PC-3 (cell line): ENCODE measurements at regions of chr14 and their contacts with region 1.

Region 1: GRCh38 chr14:39988939-39989338 is 556.7 kb upstream of the FBXO33 start:
- DNase-seq: peak; percentile 78
- ATAC-seq: peak; percentile 93
- H3K4me3 ChIP-seq: no peak overlapping the region
- H3K27ac ChIP-seq: no peak overlapping the region
- H3K4me1 ChIP-seq: no peaks in the 10 kb centered on the region
- H3K27me3 ChIP-seq: no peaks in the 10 kb centered on the region
- CTCF ChIP-seq: peak; percentile 93

Region 2: DNA sequence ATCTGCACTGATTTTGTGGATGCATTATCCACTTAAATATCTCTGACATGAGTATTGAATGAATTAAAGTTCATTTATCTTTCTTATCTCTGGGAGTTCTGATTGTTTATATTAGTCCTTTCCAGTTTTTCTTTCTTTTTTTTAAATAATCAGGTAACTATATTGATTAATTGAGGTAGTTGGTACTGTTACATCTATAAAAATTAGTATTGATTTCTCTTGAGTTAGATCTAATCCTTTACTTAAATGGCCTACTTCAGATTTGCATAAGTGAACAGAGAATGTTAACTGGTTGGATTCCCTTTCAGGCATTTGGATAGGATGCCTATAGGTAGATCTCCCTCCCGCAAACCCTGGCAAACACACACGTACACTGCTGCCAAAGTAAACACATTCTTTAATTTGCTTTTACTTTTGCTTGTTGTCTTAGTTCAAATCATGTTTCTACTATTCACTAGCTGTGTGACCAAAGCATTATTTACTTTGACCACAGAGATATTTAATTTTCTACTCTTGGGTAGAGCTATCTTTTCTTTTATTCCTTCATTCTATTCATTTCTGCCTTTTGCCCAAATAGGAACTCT is 379.3 kb after region 1 on chr14:
- CTCF ChIA-PET with region 1: no interaction called
- POLR2A ChIA-PET with region 1: no interaction called
- intact Hi-C with region 1: loop called (anchors 1 kb)
- DNase-seq: peak; percentile 87
- ATAC-seq: peak; percentile 92
- H3K4me3 ChIP-seq: no peak overlapping the region
- H3K27ac ChIP-seq: peak overlapping the region; percentile 66
- H3K4me1 ChIP-seq: peaks cover 23% of the 10 kb centered on the region
- H3K27me3 ChIP-seq: no peaks in the 10 kb centered on the region
- CTCF ChIP-seq: no peak

Region 3: DNA sequence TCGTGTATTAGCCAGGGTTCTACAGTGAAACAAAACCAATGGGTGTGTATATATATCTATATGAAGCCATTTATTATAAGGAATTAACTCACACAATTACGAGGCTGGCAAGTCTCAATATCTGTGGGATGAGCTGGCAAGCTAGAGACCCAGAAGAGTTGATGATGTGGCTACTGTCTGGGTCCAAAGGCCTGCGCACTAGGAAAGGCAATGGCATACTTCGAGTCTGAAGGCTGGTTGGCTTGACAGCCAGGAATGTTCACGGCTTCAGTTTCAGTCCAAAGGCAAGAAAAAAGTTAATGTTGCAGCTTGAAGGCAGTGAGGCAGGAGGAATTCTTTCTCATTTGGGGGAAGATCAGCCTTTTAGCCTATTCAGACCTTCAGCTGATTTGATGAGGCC is 724.4 kb after region 1 on chr14:
- CTCF ChIA-PET with region 1: no interaction called
- POLR2A ChIA-PET with region 1: no interaction called
- intact Hi-C with region 1: loop called (anchors 2 kb)
- DNase-seq: no peak
- ATAC-seq: no peak
- H3K4me3 ChIP-seq: no peak overlapping the region
- H3K27ac ChIP-seq: no peak overlapping the region
- H3K4me1 ChIP-seq: no peaks in the 10 kb centered on the region
- H3K27me3 ChIP-seq: no peaks in the 10 kb centered on the region
- CTCF ChIP-seq: no peak

Region 4: GRCh38 chr14:41393512-41393911 is 1404.6 kb after region 1 on chr14:
- CTCF ChIA-PET with region 1: no interaction called
- POLR2A ChIA-PET with region 1: no interaction called
- intact Hi-C with region 1: loop called (anchors 5 kb)
- DNase-seq: peak; percentile 13
- ATAC-seq: no peak
- H3K4me3 ChIP-seq: no peak overlapping the region
- H3K27ac ChIP-seq: no peak overlapping the region
- H3K4me1 ChIP-seq: no peaks in the 10 kb centered on the region
- H3K27me3 ChIP-seq: no peaks in the 10 kb centered on the region
- CTCF ChIP-seq: peak; percentile 39; the same call in 1 of the 2 replicates